Sigmoid colon (tissue), 7 donors: ENCODE measurements at regions of chr7 and their contacts with region 1.

Region 1: DNA sequence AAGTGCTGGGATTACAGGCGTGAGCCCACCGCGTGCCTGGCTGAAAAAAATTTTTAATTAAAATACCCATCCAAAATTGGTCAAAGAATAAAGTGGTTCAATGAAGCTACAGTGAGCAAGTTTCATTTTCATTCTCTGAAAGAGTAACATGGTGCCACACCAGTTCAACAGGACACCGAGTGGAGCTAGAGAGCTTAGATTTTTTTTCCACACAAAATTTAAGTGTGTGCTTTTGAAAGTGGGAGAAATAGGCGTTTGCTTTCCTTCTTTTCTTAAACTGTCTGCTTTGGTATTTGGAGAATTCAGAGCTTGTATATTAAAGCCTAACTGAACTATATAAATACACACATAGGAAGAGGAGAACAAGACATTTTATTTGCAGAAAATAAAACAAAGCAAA is 43.4 kb downstream of the BPGM start:
- DNase-seq: no peak
- H3K4me3 ChIP-seq: peak overlapping the region in 3 of 4 donors; percentile 30 to 38 (median 34)
- H3K27ac ChIP-seq: peak overlapping the region; percentile 75 to 90 (median 82)
- H3K4me1 ChIP-seq: peaks cover 0 to 57% (median 36%) of the 10 kb centered on the region in 4 donors
- H3K27me3 ChIP-seq: no peaks in the 10 kb centered on the region
- CTCF ChIP-seq: peak; percentile 62 to 83 (median 70)
- EP300 ChIP-seq: no peak
- POLR2A ChIP-seq: no peak

Region 2: GRCh38 chr7:134514663-134515062 is 175.4 kb before region 1 on chr7:
- intact Hi-C with region 1: no loop called
- DNase-seq: no peak
- H3K4me3 ChIP-seq: no peak overlapping the region
- H3K27ac ChIP-seq: no peak overlapping the region
- H3K4me1 ChIP-seq: peaks cover 0 to 6% (median 0%) of the 10 kb centered on the region in 4 donors
- H3K27me3 ChIP-seq: no peaks in the 10 kb centered on the region
- CTCF ChIP-seq: peak; percentile 49 to 84 (median 80)
- EP300 ChIP-seq: no peak
- POLR2A ChIP-seq: no peak

Region 3: DNA sequence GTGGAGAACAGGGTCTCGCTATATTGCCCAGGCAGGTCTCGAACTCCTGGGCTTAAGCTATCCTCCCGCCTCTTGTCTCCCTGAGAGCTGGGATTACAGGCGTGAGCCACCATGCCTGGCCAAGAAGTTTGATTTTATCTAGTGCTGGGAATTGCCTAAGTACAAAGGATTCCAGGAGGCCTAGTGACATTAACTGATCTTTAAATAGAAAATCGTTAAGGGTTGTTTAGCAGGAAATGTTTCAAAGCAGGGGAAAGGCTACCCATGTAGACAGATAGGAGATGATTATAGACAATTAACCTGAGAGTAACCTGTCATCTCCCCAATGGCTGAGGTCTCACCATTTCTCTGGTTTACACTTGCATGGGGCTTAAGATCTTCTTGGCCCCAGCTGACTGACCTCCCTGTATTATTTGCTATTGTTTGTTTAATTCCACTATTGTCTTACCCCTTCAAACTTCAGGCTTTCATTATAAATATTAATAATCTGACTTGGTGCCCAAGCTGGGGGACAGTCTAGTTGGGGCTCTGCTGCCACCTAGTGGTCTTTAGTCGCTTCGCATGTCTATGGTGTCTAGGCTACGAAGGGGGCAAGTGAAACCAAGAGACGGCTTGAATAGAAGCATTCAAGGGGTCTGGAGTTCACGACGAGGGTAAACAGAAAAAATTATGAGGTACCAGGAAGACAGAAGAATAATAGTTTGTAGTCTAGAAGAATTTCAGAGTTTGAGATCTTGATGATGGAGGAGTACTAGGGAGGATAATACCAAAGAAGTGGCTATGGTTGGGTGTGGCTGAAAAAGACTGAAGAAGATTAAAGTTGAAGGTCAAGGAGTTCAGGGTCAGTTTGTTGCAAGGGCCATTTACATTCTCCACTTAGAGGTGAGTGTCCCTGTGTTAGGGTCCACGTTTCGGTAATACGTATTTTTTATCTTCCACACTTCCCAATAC is 83.8 kb before region 1 on chr7:
- intact Hi-C with region 1: no loop called
- DNase-seq: peak; percentile 79
- H3K4me3 ChIP-seq: no peak overlapping the region
- H3K27ac ChIP-seq: no peak overlapping the region
- H3K4me1 ChIP-seq: no peaks in the 10 kb centered on the region
- H3K27me3 ChIP-seq: no peaks in the 10 kb centered on the region
- CTCF ChIP-seq: peak in 3 of 4 experiments; percentile 85 to 90 (median 85)
- EP300 ChIP-seq: no peak
- POLR2A ChIP-seq: no peak

Region 4: DNA sequence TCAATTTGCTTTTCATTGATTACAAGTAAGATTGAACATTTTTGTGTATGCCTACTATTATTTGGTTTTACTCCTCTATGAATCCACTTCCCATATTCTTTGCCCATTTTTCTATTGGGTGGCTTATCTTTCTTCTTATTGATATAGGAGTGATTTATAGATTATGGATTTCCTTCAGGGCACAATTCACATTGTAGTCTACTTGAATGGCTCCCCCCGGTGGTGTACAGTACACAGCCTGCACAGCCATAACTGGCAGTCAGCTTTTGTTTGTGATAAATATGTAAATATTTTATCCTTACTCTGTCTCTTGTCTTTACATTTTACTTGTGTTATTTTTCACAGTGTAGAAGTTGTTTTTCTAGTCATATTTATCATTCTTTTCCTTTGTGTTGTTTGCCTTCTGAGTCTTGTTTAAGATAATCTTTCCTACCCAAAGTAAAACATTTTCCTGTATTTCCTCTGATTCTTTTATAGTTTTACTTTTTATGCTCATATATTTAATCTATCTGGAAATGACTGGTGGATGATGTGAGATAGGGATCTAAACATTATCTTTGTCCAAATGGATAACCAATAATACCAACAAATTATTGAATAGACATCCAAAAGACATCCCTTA is 65.5 kb after region 1 on chr7:
- intact Hi-C with region 1: loop called (anchors 2 kb)
- DNase-seq: no peak
- H3K4me3 ChIP-seq: no peak overlapping the region
- H3K27ac ChIP-seq: no peak overlapping the region
- H3K4me1 ChIP-seq: peaks cover 0 to 20% (median 10%) of the 10 kb centered on the region in 4 donors
- H3K27me3 ChIP-seq: no peaks in the 10 kb centered on the region
- CTCF ChIP-seq: peak in 3 of 4 experiments; percentile 19 to 55 (median 39)
- EP300 ChIP-seq: no peak
- POLR2A ChIP-seq: no peak

Region 5: GRCh38 chr7:134891262-134891695 is 201.3 kb after region 1 on chr7:
- intact Hi-C with region 1: loop called (anchors 5 kb)
- DNase-seq: peak; percentile 94
- H3K4me3 ChIP-seq: peak overlapping the region; percentile 30 to 41 (median 40)
- H3K27ac ChIP-seq: peak overlapping the region; percentile 78 to 88 (median 80)
- H3K4me1 ChIP-seq: peaks cover 0 to 79% (median 66%) of the 10 kb centered on the region in 4 donors
- H3K27me3 ChIP-seq: no peaks in the 10 kb centered on the region
- CTCF ChIP-seq: no peak
- EP300 ChIP-seq: peak in 2 of 4 donors; percentile 50 to 56
- POLR2A ChIP-seq: no peak

Region 6: GRCh38 chr7:134986363-134987251 is 296.6 kb after region 1 on chr7 and contains the start of gene AGBL3:
- intact Hi-C with region 1: loop called (anchors 2 kb)
- DNase-seq: peak; percentile 99
- H3K4me3 ChIP-seq: peak within 1 kb of the TSS; percentile 63 to 83 (median 73)
- H3K27ac ChIP-seq: peak within 1 kb of the TSS; percentile 89 to 93 (median 92)
- H3K4me1 ChIP-seq: peaks cover 0 to 18% (median 11%) of the 10 kb centered on the region in 4 donors
- H3K27me3 ChIP-seq: no peaks in the 10 kb centered on the region
- CTCF ChIP-seq: peak; percentile 55 to 75 (median 64)
- EP300 ChIP-seq: peak in 1 of 4 donors; percentile 50
- POLR2A ChIP-seq: peak in 1 of 2 donors; percentile 39
- total RNA-seq, gene AGBL3: 0.95 to 3.1 (median 1.1) TPM

Region 7: DNA sequence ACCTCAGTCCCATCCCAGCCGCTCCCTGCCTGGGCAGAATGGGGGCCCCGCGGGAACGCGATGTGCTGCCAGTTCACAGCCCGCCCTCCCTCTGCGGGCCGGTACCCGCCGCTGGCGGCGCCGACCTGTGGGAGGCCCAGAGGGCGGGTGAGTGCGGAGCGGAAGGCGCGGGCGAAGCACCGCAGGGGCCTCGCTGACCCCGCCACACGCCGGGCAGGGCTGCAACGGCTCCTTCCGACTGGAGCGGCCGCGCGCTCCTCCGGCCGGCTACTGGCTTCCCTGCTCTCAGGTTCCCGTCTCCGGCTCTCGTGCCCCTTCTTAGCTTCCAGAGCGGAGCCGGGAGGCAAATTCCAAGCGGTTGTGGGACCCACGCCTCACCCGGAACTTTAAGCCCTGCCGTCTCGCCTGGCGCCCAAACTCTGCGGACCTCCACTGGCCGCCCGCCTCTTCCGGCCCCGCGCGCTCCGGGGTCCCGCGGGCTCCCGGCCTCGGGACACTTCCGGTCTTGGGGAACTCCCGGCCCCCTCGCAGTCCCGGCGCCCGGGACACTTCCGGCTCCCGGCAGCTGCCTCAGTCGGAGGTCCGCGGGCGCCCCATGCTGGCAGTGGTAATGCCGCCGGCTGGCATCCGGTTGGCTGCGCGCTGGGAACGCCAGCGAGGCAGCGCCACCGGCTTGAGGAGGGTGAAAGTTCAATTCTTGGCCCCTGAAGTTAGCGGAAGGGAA is 480.4 kb after region 1 on chr7 and contains the start of gene CYREN:
- intact Hi-C with region 1: loop called (anchors 1 kb)
- DNase-seq: peak; percentile 97
- H3K4me3 ChIP-seq: peak within 1 kb of the TSS; percentile 61 to 92 (median 74)
- H3K27ac ChIP-seq: peak within 1 kb of the TSS; percentile 94 to 99 (median 96)
- H3K4me1 ChIP-seq: peaks cover 0 to 46% (median 38%) of the 10 kb centered on the region in 4 donors
- H3K27me3 ChIP-seq: no peaks in the 10 kb centered on the region
- CTCF ChIP-seq: peak; percentile 35 to 62 (median 44)
- EP300 ChIP-seq: no peak
- POLR2A ChIP-seq: peak in 1 of 2 donors; percentile 49
- total RNA-seq, gene CYREN: 27.5 to 31.9 (median 29.2) TPM

Region 8: DNA sequence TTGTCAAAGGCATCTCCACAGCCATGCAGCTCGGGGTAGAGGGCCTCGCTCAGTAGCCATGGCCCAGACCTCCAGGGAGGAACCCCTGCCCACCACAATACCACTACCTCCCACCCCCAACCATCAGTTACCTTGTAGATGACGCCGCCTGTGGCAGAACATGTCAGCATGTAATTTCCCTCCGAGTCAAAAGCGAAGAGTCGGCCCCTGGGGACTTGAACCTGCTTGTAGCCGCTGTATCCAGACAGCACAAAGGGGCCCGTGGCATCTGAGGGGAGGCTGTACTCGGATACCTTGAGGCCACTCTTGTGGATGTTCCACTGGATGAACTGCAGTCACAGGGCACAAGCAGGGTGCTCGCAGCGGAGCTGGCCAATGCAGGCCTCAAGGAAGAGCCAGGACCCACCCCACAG is 496.8 kb after region 1 on chr7:
- intact Hi-C with region 1: no loop called
- DNase-seq: no peak
- H3K4me3 ChIP-seq: no peak overlapping the region
- H3K27ac ChIP-seq: no peak overlapping the region
- H3K4me1 ChIP-seq: no peaks in the 10 kb centered on the region
- H3K27me3 ChIP-seq: no peaks in the 10 kb centered on the region
- CTCF ChIP-seq: no peak
- EP300 ChIP-seq: no peak
- POLR2A ChIP-seq: no peak